Right ventricle myocardium inferior (tissue), 1 donor: ENCODE measurements at regions of chr1 and their contacts with region 1.

Region 1: DNA sequence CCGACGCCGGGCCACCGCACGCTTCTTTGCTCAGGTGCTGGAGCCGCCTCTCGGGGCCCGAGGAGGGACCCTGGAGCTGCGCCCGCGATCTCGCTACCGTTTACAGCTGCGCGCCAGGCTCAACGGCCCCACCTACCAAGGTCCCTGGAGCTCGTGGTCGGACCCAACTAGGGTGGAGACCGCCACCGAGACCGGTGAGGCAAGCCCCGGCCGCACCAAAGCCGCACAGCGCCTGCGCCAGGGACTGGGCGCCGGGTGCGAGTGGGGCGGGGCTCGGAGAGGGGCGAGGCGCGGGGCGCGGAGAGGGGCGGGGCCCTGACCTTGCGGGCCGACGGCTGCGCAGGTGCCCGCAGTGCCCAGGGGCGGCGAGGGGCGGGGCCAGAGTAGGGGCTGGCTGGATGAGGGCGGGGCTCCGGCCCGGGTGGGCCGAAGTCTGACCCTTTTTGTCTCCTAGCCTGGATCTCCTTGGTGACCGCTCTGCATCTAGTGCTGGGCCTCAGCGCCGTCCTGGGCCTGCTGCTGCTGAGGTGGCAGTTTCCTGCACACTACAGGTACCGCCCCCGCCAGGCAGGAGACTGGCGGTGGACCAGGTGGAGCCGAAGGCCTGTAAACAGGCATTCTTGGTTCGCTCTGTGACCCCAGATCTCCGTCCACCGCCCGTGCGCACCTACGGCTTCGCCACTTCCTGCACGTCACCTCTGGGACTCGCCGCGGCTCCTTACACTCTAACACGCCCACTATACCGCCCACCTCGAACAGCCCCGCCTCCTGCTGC is 9.8 kb upstream of the CDC20 start:
- DNase-seq: peak; percentile 91
- ATAC-seq: peak; percentile 92

Region 2: GRCh38 chr1:42941640-42942330 is 407.2 kb before region 1 on chr1:
- intact Hi-C with region 1: loop called (anchors 10 kb)
- DNase-seq: peak; percentile 81
- ATAC-seq: peak; percentile 42

Region 3: DNA sequence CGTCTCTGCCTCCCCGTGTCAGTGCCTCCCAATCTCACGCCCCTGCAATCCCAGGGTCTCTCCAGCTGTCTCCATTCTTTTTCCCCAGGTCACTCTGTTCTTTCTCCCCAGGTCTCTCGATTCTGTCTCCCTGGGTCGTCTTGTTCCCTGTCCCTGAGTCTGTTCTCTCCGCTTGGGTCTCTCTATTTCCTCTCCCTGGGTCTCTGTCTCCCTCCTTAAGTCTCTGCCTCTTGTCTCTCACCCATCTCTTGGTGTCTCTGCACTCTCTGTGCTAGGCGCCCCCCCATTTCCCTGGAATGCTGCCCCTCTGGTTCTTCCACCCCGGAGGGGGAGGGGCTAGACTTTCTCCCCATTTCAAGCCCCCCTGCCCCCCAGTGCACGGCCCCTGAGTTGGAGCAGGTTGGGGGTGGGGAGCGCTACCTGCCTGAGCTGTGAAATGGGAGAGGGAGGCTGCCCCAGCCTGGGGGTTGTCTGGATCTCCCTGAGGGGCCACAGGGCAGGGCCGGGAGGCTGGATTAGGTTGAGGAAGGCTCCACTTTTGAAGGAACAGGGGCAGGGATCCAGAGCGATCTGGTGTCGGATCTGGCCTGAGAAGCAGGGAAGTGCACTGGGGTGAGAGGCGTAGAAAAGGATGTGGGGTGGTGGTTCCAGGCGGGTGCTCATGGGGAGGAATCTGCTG is 183.0 kb after region 1 on chr1:
- intact Hi-C with region 1: no loop called
- DNase-seq: peak; percentile 27
- ATAC-seq: no peak